Activated CD8-positive, alpha-beta T cell treated with anti-CD3 and anti-CD28 coated beads, Interleukin-2, amount 10 ng/mL, durations not matched to agents 7 days and 5 days (primary cell): ENCODE measurements at regions of chr3 and their contacts with region 1.

Region 1: GRCh38 chr3:151210676-151211381 is 7.8 kb upstream of the GPR171 start:
- DNase-seq: peak; percentile 43
- ATAC-seq: peak; percentile 66
- H3K4me3 Mint-ChIP-seq: peak overlapping the region; percentile 74
- H3K27ac Mint-ChIP-seq: peak overlapping the region; percentile 86
- H3K4me1 Mint-ChIP-seq: peaks cover 57% of the 10 kb centered on the region
- H3K27me3 Mint-ChIP-seq: no peaks in the 10 kb centered on the region

Region 2: DNA sequence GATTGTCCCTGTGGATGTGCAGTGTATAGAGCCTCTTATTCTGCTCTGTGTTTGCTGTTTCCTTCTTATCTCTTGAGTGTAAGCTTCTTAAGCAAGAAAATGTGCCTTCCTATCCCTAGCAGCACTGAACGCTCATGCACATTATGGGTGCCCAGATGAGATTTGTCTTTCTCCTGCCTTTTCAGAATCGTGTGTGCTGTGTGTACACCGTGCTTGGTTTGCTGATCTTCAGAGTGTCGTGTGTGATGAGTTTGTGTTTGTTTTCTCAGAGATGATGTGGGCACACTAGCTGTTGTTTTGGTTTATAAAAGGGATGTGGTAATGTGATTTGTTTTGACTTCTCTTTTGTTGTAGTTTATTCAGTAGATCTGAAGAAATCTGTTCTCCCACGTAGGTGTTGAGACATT is 27.6 kb before region 1 on chr3:
- CTCF ChIA-PET with region 1: interaction called, 10 read pairs
- POLR2A ChIA-PET with region 1: no interaction called
- DNase-seq: peak; percentile 38
- ATAC-seq: peak; percentile 79
- H3K4me3 Mint-ChIP-seq: peak overlapping the region; percentile 58
- H3K27ac Mint-ChIP-seq: peak overlapping the region; percentile 81
- H3K4me1 Mint-ChIP-seq: peaks cover 47% of the 10 kb centered on the region
- H3K27me3 Mint-ChIP-seq: no peaks in the 10 kb centered on the region

Region 3: GRCh38 chr3:151248772-151249337 is 38.0 kb after region 1 on chr3:
- CTCF ChIA-PET with region 1: no interaction called
- POLR2A ChIA-PET with region 1: no interaction called
- DNase-seq: no peak
- ATAC-seq: no peak
- H3K4me3 Mint-ChIP-seq: no peak overlapping the region
- H3K27ac Mint-ChIP-seq: no peak overlapping the region
- H3K4me1 Mint-ChIP-seq: peaks cover 5% of the 10 kb centered on the region
- H3K27me3 Mint-ChIP-seq: peaks cover 21% of the 10 kb centered on the region